Left ventricle myocardium inferior (tissue), 1 donor: ENCODE measurements at regions of chr20 and their contacts with region 1.

Region 1: GRCh38 chr20:38229376-38230252 is 30.9 kb downstream of the KIAA1755 start:
- DNase-seq: no peak
- H3K4me3 ChIP-seq: no peak overlapping the region
- H3K27ac ChIP-seq: no peak overlapping the region
- H3K4me1 ChIP-seq: peaks cover 11% of the 10 kb centered on the region
- H3K27me3 ChIP-seq: peaks cover 4% of the 10 kb centered on the region
- CTCF ChIP-seq: peak; percentile 64

Region 2: DNA sequence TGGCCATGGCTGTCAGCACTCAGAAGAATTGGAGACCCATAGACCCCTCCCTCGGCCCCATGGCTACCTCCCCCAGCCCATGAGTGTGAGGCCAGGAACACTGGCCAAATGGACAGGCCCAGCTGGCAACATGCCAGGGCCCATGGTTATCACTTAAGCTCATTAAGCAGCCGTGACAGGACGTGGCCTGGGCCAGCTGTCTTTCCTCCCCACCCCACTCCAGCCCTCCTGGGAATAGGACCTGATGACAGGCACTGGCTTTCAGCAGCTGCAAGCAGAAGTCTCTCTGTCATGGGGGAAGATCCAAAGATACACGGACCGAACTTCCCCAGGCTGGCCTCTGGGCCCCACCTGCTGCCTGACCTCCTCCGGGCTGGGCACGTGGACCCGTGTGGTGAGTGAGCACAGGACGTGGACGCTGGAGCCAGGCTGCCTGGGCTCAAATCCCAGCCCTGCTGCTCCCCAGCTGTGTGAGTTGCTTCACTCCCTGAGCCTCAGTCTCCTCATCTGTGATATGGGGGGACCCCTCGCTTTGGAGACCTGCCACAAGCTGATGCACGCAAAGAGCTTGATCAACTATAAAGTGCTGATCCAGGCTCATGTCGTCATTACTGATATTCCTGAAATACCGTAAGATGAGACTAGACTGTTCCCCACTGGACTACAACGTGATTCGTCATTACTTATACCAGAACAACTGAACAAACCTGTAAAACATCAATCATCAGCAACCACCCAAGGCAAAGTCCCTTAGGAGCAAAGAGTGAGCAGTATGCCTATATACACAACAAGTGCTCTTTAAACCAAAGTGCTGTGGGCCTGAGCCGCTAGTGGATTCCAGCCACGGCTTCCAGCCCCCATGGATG is 348.7 kb before region 1 on chr20:
- intact Hi-C with region 1: no loop called
- DNase-seq: peak; percentile 87
- H3K4me3 ChIP-seq: no peak overlapping the region
- H3K27ac ChIP-seq: peak overlapping the region; percentile 54
- H3K4me1 ChIP-seq: peaks cover 61% of the 10 kb centered on the region
- H3K27me3 ChIP-seq: peaks cover 31% of the 10 kb centered on the region
- CTCF ChIP-seq: no peak

Region 3: DNA sequence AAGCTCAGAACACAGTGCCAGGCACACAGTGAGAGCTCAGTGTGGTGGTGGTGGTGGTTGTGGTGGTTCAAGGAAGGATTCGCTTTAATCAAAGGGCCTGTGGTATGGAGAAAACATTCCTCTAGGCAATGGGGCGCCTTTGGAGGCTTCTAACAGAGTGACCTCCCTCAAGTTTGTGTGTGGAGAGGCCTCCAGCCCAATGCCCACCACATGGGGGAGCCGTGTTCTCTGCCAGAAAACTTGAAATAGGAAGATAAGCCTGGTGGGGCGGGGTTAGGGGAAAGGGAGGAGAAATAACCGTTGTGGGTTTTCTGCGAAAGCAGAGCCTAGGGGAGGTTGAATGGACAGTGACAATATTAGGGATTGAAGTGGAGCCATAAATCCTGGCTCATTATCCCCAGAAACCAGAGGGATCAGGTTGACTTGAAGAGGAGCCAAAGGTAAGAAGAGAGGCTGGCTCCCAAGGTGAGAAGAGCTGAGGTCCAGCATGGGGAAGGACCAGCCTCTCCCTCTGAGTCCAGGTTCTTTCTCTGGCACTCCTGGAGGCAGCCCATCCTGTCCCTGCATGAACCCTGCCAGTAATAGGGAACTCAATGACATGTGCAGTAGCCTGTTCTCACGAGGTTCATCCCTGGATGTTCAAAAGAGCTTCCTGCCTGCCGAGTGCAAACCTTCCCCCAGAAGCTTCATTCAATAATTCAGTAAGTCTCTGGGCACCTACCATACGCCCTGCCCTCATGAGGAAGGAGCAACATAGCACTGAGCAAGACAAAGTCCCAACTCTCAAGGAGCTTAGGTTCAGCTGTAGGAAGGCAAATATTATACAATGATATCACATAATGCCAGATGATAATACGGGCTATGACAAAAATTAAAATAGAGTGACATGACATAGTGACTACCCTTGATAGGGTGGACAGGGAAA is 116.0 kb before region 1 on chr20:
- intact Hi-C with region 1: no loop called
- DNase-seq: no peak
- H3K4me3 ChIP-seq: no peak overlapping the region
- H3K27ac ChIP-seq: peak overlapping the region; percentile 47
- H3K4me1 ChIP-seq: peaks cover 45% of the 10 kb centered on the region
- H3K27me3 ChIP-seq: no peaks in the 10 kb centered on the region
- CTCF ChIP-seq: peak; percentile 31

Region 4: DNA sequence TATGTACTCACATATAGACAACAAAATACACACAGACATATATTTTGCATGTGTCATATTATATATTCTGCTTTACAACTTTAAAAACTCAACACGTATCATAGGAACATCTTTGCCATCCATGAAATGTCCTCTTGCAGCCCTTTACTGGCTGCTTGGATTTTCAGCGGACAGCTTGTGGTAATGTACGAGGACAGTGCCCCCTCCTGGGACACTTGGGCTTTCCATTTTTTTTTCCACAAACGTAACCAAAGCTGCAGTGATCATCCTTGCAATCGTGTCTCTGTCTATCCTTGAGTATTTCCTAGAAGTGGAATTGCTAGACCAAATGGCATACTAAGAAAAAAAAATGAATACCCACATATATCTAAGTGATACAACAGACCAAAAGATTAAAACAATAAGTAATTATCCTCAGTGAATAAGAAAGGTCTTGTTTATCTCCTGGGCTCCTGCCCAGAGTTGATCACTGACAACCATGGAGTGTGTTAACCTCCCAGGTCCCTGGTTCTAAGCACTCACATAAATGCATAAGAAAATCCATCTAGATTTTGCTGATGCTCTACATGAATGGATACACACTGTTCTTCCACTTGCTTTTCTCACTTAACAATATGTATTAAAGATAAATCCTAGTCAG is 92.5 kb after region 1 on chr20:
- intact Hi-C with region 1: loop called (anchors 5 kb)
- DNase-seq: no peak
- H3K4me3 ChIP-seq: no peak overlapping the region
- H3K27ac ChIP-seq: no peak overlapping the region
- H3K4me1 ChIP-seq: no peaks in the 10 kb centered on the region
- H3K27me3 ChIP-seq: peaks cover 51% of the 10 kb centered on the region
- CTCF ChIP-seq: peak; percentile 73